AG04449 (cell line): ENCODE measurements at regions of chr1 and their contacts with region 1.

Region 1: DNA sequence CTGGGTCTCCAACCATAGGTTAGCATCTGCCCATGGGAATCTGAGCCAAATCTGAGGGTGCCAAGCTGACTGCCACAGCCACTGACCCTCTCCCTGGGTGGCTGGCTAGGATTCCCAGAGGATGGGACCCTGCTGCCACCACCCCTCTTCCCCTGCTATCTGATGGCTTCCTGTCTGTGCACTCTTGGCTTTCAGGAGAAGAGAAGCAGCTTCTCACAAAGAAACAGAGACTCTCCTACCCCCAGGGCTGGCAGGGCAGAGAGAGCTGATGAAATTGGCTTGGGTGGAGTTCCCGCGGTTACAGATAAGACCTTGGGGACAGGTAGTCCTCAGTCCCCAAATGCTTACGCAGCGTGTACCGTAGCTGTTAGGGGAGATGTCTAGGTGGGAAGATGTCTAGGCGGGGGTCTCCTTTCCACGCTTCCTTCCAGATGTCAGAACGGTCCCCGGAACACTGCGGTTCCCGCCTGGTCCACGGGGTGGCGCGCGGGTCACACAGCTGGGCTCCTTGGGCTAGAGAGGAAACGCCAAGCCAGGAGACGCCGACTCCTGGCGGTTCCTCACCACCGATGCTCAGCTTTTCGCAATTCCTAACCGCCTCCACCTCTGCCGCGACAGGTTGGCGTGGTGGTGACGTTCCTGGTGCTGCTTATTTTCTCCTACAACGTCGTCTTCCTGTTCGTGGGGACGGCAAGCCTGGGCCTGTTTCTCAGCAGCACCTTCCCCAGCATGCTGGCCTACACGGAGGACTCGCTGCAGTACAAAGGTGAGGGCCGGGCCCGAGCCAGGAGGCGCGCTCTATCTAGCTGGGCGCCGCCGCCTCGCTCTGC is 40.1 kb downstream of the ELK4 start:
- DNase-seq: no peak
- H3K4me3 ChIP-seq: peak overlapping the region; percentile 52
- CTCF ChIP-seq: peak; percentile 100

Region 2: GRCh38 chr1:205528887-205529825 is 62.6 kb before region 1 on chr1:
- CTCF ChIA-PET with region 1: interaction called, 20 read pairs
- POLR2A ChIA-PET with region 1: no interaction called
- DNase-seq: no peak
- H3K4me3 ChIP-seq: peak overlapping the region; percentile 45
- CTCF ChIP-seq: peak; percentile 93

Region 3: GRCh38 chr1:205568469-205569361 is 23.0 kb before region 1 on chr1:
- CTCF ChIA-PET with region 1: interaction called, 11 read pairs
- POLR2A ChIA-PET with region 1: no interaction called
- DNase-seq: no peak
- H3K4me3 ChIP-seq: no peak overlapping the region
- CTCF ChIP-seq: no peak

Region 4: GRCh38 chr1:205619376-205619775 is 27.6 kb after region 1 on chr1:
- CTCF ChIA-PET with region 1: interaction called, 22 read pairs
- POLR2A ChIA-PET with region 1: no interaction called
- DNase-seq: no peak
- H3K4me3 ChIP-seq: no peak overlapping the region
- CTCF ChIP-seq: no peak

Region 5: GRCh38 chr1:205645519-205645918 is 53.8 kb after region 1 on chr1:
- CTCF ChIA-PET with region 1: interaction called, 31 read pairs
- POLR2A ChIA-PET with region 1: no interaction called
- DNase-seq: no peak
- H3K4me3 ChIP-seq: no peak overlapping the region
- CTCF ChIP-seq: no peak